Prostate gland (tissue), 2 donors: ENCODE measurements at regions of chr1 and their contacts with region 1.

Region 1: DNA sequence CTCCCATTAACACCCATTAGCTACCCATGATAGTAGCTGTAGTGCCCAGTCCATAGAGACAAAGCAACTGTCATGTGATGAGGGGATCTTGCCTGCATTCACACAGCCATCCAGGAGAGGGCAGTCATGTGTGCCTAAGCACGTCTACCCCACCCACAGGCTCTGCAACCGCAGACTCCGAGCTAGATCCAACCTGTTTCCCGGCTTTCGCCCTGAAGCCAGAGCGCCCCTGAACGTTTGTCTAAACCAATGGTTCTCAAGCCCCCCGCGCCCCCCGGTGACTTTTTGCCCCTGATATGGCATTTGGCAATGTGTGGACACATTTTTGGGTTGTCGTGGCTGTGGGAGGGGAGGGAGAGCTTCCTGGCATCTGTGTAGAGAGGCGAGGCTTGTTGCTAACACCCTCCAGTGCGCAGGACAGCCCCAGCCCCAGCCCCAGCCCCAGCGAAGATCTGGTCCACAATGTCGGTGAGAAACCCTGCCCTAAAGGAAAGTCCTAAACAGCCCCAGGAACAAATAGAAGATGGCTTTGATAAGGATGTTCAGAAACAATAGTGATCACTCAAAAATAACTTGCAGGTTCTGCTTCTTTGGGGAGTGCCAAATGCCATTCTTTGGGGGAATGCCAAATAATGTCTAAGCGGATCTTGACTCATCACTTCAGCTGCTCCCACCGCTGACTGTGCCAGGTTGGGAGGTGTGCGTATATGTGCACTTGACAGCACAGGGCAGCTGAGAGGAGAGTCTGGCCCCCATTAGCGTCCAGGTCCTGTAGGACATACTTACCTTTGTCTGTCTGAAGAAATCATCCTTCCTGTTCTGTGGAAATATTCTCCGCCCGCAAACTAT is 34.5 kb downstream of the SLC44A3 start:
- DNase-seq: peak; percentile 91
- H3K4me3 ChIP-seq: peak overlapping the region; percentile 25 to 36
- H3K27ac ChIP-seq: peak overlapping the region; percentile 81 to 88
- H3K4me1 ChIP-seq: no peaks in the 10 kb centered on the region
- H3K27me3 ChIP-seq: no peaks in the 10 kb centered on the region
- CTCF ChIP-seq: peak; percentile 83 to 98 (median 97)
- POLR2A ChIP-seq: no peak

Region 2: GRCh38 chr1:94590203-94591137 is 264.2 kb before region 1 on chr1:
- intact Hi-C with region 1: no loop called
- DNase-seq: peak; percentile 64
- H3K4me3 ChIP-seq: no peak overlapping the region
- H3K27ac ChIP-seq: peak overlapping the region; percentile 66 to 68
- H3K4me1 ChIP-seq: peaks cover under 1% of the 10 kb centered on the region
- H3K27me3 ChIP-seq: no peaks in the 10 kb centered on the region
- CTCF ChIP-seq: no peak
- POLR2A ChIP-seq: no peak

Region 3: GRCh38 chr1:94622757-94623156 is 231.9 kb before region 1 on chr1:
- intact Hi-C with region 1: no loop called
- DNase-seq: no peak
- H3K4me3 ChIP-seq: no peak overlapping the region
- H3K27ac ChIP-seq: peak overlapping the region in 1 of 2 donors; percentile 82
- H3K4me1 ChIP-seq: peaks cover 7% of the 10 kb centered on the region
- H3K27me3 ChIP-seq: no peaks in the 10 kb centered on the region
- CTCF ChIP-seq: no peak
- POLR2A ChIP-seq: no peak

Region 4: GRCh38 chr1:95023399-95024043 is 168.8 kb after region 1 on chr1:
- intact Hi-C with region 1: loop called (anchors 5 kb)
- DNase-seq: no peak
- H3K4me3 ChIP-seq: no peak overlapping the region
- H3K27ac ChIP-seq: peak overlapping the region; percentile 16 to 60
- H3K4me1 ChIP-seq: no peaks in the 10 kb centered on the region
- H3K27me3 ChIP-seq: no peaks in the 10 kb centered on the region
- CTCF ChIP-seq: no peak
- POLR2A ChIP-seq: no peak

Region 5: GRCh38 chr1:95043141-95043980 is 188.7 kb after region 1 on chr1:
- intact Hi-C with region 1: loop called (anchors 1 kb)
- DNase-seq: peak; percentile 89
- H3K4me3 ChIP-seq: no peak overlapping the region
- H3K27ac ChIP-seq: peak overlapping the region; percentile 78 to 84
- H3K4me1 ChIP-seq: no peaks in the 10 kb centered on the region
- H3K27me3 ChIP-seq: no peaks in the 10 kb centered on the region
- CTCF ChIP-seq: peak; percentile 94 to 100 (median 99)
- POLR2A ChIP-seq: no peak

Region 6: GRCh38 chr1:95233737-95234500 is 379.2 kb after region 1 on chr1 and contains the start of gene RWDD3:
- intact Hi-C with region 1: loop called (anchors 5 kb)
- DNase-seq: peak; percentile 94
- H3K4me3 ChIP-seq: peak within 1 kb of the TSS; percentile 73 to 85
- H3K27ac ChIP-seq: peak within 1 kb of the TSS; percentile 84 to 85
- H3K4me1 ChIP-seq: peaks cover 3% of the 10 kb centered on the region
- H3K27me3 ChIP-seq: no peaks in the 10 kb centered on the region
- CTCF ChIP-seq: peak; percentile 64 to 95 (median 94)
- POLR2A ChIP-seq: peak; percentile 60
- total RNA-seq, gene RWDD3: 12.8 to 14.4 TPM